Activated naive CD8-positive, alpha-beta T cell treated with anti-CD3 and anti-CD28 coated beads, Interleukin-2, amount 10 ng/mL, durations not matched to agents 7 days and 5 days (primary cell): ENCODE measurements at regions of chr10 and their contacts with region 1.

Region 1: DNA sequence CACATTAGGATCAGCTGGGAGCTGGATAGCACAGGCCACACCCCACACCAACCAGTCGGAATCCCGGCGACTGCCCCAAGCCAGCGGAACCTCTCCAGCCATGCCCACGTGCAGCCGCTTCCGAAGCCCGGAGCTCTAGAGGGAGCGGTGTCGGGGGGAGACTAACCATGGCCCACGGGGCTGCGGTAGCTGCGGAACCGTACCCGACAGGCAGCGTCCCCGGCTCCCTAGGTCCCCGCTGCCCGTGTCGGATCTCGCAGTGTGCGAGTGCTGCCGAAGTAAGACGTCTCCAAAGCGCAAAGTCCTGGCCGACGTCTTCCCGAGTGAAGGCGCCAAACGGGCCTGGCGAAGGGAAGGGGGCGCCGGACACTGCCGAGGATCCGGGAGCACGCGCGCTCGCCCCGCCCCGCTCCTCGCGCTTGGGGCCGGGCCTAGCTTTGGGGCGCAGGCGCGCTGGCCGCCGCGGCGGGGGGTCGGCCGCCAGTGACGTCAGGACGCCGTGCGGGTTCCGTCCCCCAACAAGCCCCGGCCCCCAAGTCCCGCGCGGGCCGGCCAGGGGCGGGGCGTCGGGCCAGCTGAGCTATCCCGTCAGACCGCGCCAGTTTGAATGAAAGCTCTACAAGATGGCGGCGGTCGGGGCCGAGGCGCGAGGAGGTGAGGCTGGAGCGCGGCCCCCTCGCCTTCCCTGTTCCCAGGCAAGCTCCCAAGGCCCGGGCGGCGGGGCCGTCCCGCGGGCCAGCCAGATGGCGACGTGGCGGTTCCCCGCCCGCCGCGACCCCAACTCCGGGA is at the start of gene SUV39H2:
- DNase-seq: peak; percentile 98
- ATAC-seq: peak; percentile 93
- H3K4me3 Mint-ChIP-seq: peak within 1 kb of the TSS; percentile 96
- H3K27ac Mint-ChIP-seq: peak within 1 kb of the TSS; percentile 89
- H3K4me1 Mint-ChIP-seq: peaks cover 24% of the 10 kb centered on the region
- H3K27me3 Mint-ChIP-seq: no peaks in the 10 kb centered on the region
- total RNA-seq, gene SUV39H2: 19.4 to 22.3 TPM

Region 2: DNA sequence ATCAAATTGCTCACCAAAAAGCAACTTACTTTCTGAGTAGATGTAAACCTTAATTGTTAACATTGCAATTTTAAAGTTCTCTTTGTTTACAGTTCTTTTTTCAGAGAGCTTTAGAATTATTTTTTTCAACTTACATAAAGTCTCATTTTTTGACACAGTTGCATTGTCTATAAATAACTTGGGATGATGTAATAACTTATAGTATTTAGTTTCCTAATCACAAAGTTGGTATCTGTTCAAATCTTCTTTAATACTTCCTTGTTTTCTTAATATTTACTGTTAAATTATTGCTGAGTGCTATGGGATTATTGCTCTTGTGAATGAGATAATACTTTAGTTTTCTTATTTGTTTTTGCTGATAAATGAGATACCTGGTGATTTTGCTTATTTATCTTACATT is 18.7 kb before region 1 on chr10:
- POLR2A ChIA-PET with region 1: no interaction called
- DNase-seq: no peak
- ATAC-seq: no peak
- H3K4me3 Mint-ChIP-seq: no peak overlapping the region
- H3K27ac Mint-ChIP-seq: no peak overlapping the region
- H3K4me1 Mint-ChIP-seq: peaks cover 3% of the 10 kb centered on the region
- H3K27me3 Mint-ChIP-seq: no peaks in the 10 kb centered on the region

Region 3: GRCh38 chr10:14904316-14904732 is 25.9 kb after region 1 on chr10:
- POLR2A ChIA-PET with region 1: no interaction called
- DNase-seq: no peak
- ATAC-seq: no peak
- H3K4me3 Mint-ChIP-seq: no peak overlapping the region
- H3K27ac Mint-ChIP-seq: no peak overlapping the region
- H3K4me1 Mint-ChIP-seq: peaks cover 5% of the 10 kb centered on the region
- H3K27me3 Mint-ChIP-seq: no peaks in the 10 kb centered on the region

Region 4: GRCh38 chr10:14954001-14954770 is 75.7 kb after region 1 on chr10 and contains the start of gene DCLRE1C:
- POLR2A ChIA-PET with region 1: interaction called, 26 read pairs
- DNase-seq: peak; percentile 93
- ATAC-seq: peak; percentile 95
- H3K4me3 Mint-ChIP-seq: peak within 1 kb of the TSS; percentile 89
- H3K27ac Mint-ChIP-seq: peak within 1 kb of the TSS; percentile 89
- H3K4me1 Mint-ChIP-seq: peaks cover 49% of the 10 kb centered on the region
- H3K27me3 Mint-ChIP-seq: no peaks in the 10 kb centered on the region
- total RNA-seq, gene DCLRE1C: 47.1 to 47.7 TPM

Region 5: DNA sequence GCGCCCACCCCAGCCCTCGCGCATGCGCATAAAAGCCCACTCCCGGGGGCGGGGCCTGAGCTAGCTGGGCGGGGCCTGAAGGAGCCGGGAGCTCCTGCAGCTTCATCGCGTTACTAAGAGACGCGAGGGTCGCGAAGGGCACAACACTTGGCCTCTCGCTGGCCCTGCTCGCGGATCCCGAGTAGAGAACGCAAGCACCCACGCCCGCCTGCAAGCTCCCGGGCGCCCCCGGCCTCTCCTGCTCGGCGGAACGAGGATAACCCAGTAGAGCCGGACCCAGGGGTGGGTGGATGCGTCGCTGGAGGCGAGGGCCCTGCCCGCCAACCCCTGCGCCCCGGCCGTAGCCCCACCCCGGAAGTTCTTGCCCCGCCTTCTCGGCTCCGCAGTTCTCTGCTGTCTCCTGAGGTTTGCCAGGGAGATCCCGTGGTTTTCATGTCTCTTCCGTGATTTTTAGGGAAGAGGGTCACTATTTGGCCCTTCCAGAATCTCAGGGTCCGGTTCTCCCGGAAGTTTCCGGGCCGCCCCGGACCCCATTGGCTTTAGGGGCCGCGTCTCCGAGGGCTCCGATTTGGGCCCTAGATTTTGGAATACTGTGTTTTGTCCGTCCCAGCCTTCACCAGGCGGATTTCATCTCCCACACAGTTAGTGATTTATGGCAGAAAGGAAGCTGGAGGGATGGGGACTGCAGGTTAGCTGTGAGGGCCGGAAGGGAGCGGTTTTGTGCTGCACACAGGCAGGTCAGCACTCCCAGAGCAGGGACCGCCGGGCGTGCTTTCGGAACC is 81.0 kb after region 1 on chr10 and contains the start of gene MEIG1:
- POLR2A ChIA-PET with region 1: interaction called, 26 read pairs
- DNase-seq: peak; percentile 100
- ATAC-seq: peak; percentile 91
- H3K4me3 Mint-ChIP-seq: peak within 1 kb of the TSS; percentile 82
- H3K27ac Mint-ChIP-seq: peak within 1 kb of the TSS; percentile 95
- H3K4me1 Mint-ChIP-seq: peaks cover 26% of the 10 kb centered on the region
- H3K27me3 Mint-ChIP-seq: no peaks in the 10 kb centered on the region
- total RNA-seq, gene MEIG1: 0.78 to 0.88 TPM